IMR-90 (cell line): ENCODE measurements at regions of chr13 and their contacts with region 1.

Region 1: GRCh38 chr13:31044377-31045285 is 112.2 kb downstream of the TEX26 start:
- DNase-seq: peak; percentile 81
- ATAC-seq: peak; percentile 72
- H3K4me3 ChIP-seq: no peak overlapping the region
- H3K27ac ChIP-seq: peak overlapping the region; percentile 80
- H3K4me1 ChIP-seq: peaks cover 20% of the 10 kb centered on the region
- H3K27me3 ChIP-seq: no peaks in the 10 kb centered on the region
- CTCF ChIP-seq: peak; percentile 97
- POLR2A ChIP-seq: peak; percentile 12; the same call in 1 of the 2 replicates
- RAD21 ChIP-seq: peak; percentile 99

Region 2: GRCh38 chr13:30465585-30466357 is 578.9 kb before region 1 on chr13 and contains the start of gene HMGB1:
- CTCF ChIA-PET with region 1: no interaction called
- POLR2A ChIA-PET with region 1: no interaction called
- dilution Hi-C with region 1: no loop called
- in situ Hi-C with region 1: loop called (anchors 10 kb)
- intact Hi-C with region 1: loop called (anchors 2 kb)
- DNase-seq: peak; percentile 99
- ATAC-seq: peak; percentile 89
- H3K4me3 ChIP-seq: peak within 1 kb of the TSS; percentile 74
- H3K27ac ChIP-seq: peak within 1 kb of the TSS; percentile 87
- H3K4me1 ChIP-seq: peaks cover 3% of the 10 kb centered on the region
- H3K27me3 ChIP-seq: no peaks in the 10 kb centered on the region
- CTCF ChIP-seq: no peak
- POLR2A ChIP-seq: peak; percentile 93
- RAD21 ChIP-seq: no peak
- total RNA-seq, gene HMGB1: 276 and 480 TPM in 2 replicates

Region 3: GRCh38 chr13:30639671-30640070 is 405.0 kb before region 1 on chr13:
- CTCF ChIA-PET with region 1: no interaction called
- POLR2A ChIA-PET with region 1: no interaction called
- dilution Hi-C with region 1: no loop called
- in situ Hi-C with region 1: loop called (anchors 25 kb)
- intact Hi-C with region 1: no loop called
- DNase-seq: peak; percentile 36
- ATAC-seq: no peak
- H3K4me3 ChIP-seq: no peak overlapping the region
- H3K27ac ChIP-seq: no peak overlapping the region
- H3K4me1 ChIP-seq: no peaks in the 10 kb centered on the region; the same call in 1 of the 2 replicates
- H3K27me3 ChIP-seq: no peaks in the 10 kb centered on the region
- CTCF ChIP-seq: no peak
- POLR2A ChIP-seq: no peak
- RAD21 ChIP-seq: no peak

Region 4: GRCh38 chr13:30679483-30680330 is 364.9 kb before region 1 on chr13:
- CTCF ChIA-PET with region 1: interaction called, 3 read pairs
- POLR2A ChIA-PET with region 1: no interaction called
- dilution Hi-C with region 1: no loop called
- in situ Hi-C with region 1: no loop called
- intact Hi-C with region 1: loop called (anchors 2 kb)
- DNase-seq: peak; percentile 41
- ATAC-seq: peak; percentile 75
- H3K4me3 ChIP-seq: no peak overlapping the region
- H3K27ac ChIP-seq: no peak overlapping the region
- H3K4me1 ChIP-seq: peaks cover 11% of the 10 kb centered on the region
- H3K27me3 ChIP-seq: no peaks in the 10 kb centered on the region
- CTCF ChIP-seq: peak; percentile 65
- POLR2A ChIP-seq: no peak
- RAD21 ChIP-seq: peak; percentile 70

Region 5: GRCh38 chr13:30943881-30944280 is 100.8 kb before region 1 on chr13:
- CTCF ChIA-PET with region 1: no interaction called
- POLR2A ChIA-PET with region 1: no interaction called
- dilution Hi-C with region 1: no loop called
- in situ Hi-C with region 1: no loop called
- intact Hi-C with region 1: no loop called
- DNase-seq: no peak
- ATAC-seq: no peak
- H3K4me3 ChIP-seq: no peak overlapping the region
- H3K27ac ChIP-seq: no peak overlapping the region
- H3K4me1 ChIP-seq: no peaks in the 10 kb centered on the region
- H3K27me3 ChIP-seq: no peaks in the 10 kb centered on the region
- CTCF ChIP-seq: no peak
- POLR2A ChIP-seq: no peak
- RAD21 ChIP-seq: no peak

Region 6: GRCh38 chr13:30978981-30979956 is 65.4 kb before region 1 on chr13:
- CTCF ChIA-PET with region 1: interaction called, 3 read pairs
- POLR2A ChIA-PET with region 1: no interaction called
- dilution Hi-C with region 1: no loop called
- in situ Hi-C with region 1: no loop called
- intact Hi-C with region 1: loop called (anchors 5 kb)
- DNase-seq: no peak
- ATAC-seq: no peak
- H3K4me3 ChIP-seq: no peak overlapping the region
- H3K27ac ChIP-seq: peak overlapping the region; percentile 75
- H3K4me1 ChIP-seq: peaks cover 13% of the 10 kb centered on the region
- H3K27me3 ChIP-seq: no peaks in the 10 kb centered on the region
- CTCF ChIP-seq: peak; percentile 21; the same call in 1 of the 2 replicates
- POLR2A ChIP-seq: no peak
- RAD21 ChIP-seq: no peak

Region 7: DNA sequence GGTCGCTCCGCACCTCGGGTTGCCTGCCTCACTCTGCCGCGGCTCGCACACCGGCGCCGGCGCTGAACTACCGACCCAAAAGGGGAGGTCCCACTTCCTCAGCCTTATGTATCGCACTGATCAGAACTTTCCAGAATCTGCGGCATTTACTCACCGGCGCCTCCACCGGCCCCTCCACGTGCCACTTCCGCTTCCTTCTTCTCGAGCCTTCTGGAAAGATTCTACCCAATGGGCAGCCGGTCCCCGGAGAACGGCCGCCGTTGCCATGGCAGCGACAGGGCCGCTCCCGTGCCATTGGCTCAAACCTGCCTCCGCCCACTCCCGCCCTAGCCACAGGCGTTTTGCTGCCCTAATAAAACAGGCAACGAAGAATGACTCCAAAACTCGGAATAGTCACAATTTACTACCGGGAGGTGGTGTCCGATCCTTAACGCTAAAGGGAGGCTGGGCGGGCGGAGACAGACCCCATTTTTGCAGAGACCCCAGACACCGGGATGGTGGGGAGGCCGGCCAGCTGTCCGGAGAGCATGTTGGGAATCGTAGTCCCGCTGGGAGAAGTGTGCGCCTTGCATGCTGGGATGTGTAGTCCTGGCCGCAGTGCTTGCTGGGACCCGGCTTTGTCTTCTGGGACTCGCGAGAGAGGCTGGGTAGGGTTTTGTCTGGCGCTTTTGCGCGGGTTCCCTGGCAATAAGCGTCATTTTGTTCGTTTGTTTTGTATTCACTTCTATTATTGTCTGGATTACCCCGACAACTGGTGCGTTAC is 117.4 kb after region 1 on chr13 and contains the start of gene HSPH1:
- CTCF ChIA-PET with region 1: no interaction called
- POLR2A ChIA-PET with region 1: interaction called, 3 read pairs
- dilution Hi-C with region 1: no loop called
- in situ Hi-C with region 1: no loop called
- intact Hi-C with region 1: loop called (anchors 5 kb)
- DNase-seq: peak; percentile 99
- ATAC-seq: peak; percentile 91
- H3K4me3 ChIP-seq: peak within 1 kb of the TSS; percentile 81
- H3K27ac ChIP-seq: peak within 1 kb of the TSS; percentile 75
- H3K4me1 ChIP-seq: no peaks in the 10 kb centered on the region; the same call in 1 of the 2 replicates
- H3K27me3 ChIP-seq: no peaks in the 10 kb centered on the region
- CTCF ChIP-seq: peak; percentile 30; the same call in 1 of the 2 replicates
- POLR2A ChIP-seq: peak; percentile 93
- RAD21 ChIP-seq: no peak
- total RNA-seq, gene HSPH1: 40.3 and 58.3 TPM in 2 replicates